Common myeloid progenitor, CD34-positive (primary cell): ENCODE measurements at regions of chr5 and their contacts with region 1.

Region 1: DNA sequence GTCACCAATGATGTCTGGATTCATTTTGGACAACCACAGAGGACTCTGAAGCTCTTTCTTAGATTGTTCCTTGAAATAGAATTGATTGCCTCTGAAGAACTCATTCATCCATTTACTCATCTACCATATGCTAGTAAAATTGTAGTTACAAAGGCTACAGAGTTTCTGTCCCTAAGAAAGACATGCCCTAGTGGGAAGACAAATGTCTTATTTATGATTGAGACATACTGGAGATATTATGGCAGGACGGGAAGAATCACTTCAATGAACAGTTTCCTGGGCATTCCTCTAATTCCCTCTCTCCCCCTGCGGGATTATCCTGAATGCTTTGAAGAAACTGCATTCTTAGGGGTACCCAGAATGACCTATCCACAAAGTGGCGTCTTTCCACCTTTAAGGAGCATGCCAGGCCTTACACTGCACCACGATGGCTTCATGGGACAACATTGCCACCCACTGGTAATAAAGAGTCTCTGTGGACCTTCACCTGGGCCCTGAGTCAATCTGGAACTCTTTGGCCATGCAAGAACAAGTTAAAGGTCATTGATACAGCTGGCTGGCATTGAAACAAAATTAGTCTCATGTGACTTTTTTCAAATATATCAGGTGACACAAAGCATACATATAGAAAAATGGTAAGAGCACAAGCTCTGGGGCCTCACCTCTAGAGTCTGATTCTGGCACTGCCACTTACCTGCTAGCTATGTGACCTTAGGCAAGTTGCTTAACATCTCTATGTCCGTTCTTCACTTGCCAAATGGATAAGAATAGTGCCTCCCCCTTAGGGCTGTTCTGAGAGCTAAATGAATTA is 32.1 kb downstream of the ANKRD55 start:
- DNase-seq: peak; percentile 72 to 86 (median 78)
- H3K4me3 ChIP-seq: no peak overlapping the region
- H3K27ac ChIP-seq: no peak overlapping the region
- H3K4me1 ChIP-seq: no peaks in the 10 kb centered on the region
- H3K27me3 ChIP-seq: no peaks in the 10 kb centered on the region

Region 2: DNA sequence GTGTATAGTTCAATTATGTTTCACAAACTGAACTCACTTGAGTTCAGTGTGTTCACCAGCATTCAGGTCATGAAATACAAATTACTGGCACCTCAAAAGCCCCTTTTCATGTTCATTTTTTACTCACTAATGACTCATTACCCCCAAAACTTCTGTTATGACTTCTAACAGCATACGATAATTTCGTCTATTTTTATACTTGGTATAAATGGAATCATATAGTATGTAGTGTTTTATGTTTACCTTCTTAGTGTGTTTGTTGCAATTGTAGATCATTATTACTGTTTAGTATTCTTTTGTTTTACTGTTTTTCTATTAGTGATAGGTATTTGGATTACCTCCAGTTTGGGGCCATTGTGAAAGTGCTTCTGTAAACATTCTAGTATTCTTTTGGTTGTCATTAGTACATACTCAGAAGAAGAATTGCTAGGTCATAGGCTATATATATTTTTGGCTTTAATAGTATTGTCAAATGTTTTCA is 429.8 kb before region 1 on chr5:
- CTCF ChIA-PET with region 1: no interaction called
- POLR2A ChIA-PET with region 1: no interaction called
- DNase-seq: no peak
- H3K4me3 ChIP-seq: no peak overlapping the region
- H3K27ac ChIP-seq: no peak overlapping the region
- H3K4me1 ChIP-seq: no peaks in the 10 kb centered on the region
- H3K27me3 ChIP-seq: no peaks in the 10 kb centered on the region

Region 3: GRCh38 chr5:55982957-55983381 is 218.1 kb before region 1 on chr5:
- CTCF ChIA-PET with region 1: interaction called, 44 read pairs
- POLR2A ChIA-PET with region 1: interaction called, 3 read pairs
- DNase-seq: peak in 1 of 3 donors; percentile 10
- H3K4me3 ChIP-seq: no peak overlapping the region
- H3K27ac ChIP-seq: no peak overlapping the region
- H3K4me1 ChIP-seq: no peaks in the 10 kb centered on the region
- H3K27me3 ChIP-seq: no peaks in the 10 kb centered on the region

Region 4: DNA sequence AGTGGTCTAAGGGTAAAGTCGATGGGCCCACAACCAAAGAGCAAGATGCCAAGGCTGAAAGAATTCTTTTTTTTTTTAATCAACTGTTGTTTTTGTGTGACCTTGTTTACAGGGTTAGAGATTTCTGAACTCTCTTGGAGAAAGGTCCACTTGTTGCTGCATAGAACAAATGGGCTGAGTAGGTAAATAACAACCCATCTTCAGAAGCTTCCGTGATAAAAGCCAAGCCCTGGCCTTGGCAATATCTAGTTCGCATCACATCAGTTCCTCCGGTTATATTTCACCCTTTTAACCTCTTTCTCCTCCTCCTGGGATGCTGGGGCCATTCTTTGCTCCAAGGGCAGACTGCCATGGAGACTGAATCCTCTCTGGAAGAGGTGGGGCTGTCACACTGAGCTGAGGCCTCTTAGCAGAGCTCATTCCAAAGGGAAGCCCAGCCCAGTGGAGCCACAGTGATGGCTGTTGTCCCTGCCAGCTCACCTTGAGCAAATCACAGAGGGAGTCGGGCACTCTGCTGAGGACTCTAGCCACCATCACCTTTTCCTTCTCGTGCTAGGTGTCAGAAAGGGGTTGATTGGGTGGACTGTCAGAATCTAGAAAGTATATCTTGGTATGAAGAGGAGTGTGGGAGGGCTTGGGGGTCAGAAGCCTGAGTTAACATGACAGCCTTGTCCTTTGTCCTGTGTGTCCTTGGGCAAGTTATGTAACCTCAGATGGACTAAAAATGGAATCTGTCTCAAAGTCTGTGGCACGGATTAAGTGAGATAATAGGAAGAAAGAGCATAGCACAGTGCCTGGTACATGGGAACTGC is 14.2 kb after region 1 on chr5:
- CTCF ChIA-PET with region 1: interaction called, 13 read pairs
- POLR2A ChIA-PET with region 1: no interaction called
- DNase-seq: no peak
- H3K4me3 ChIP-seq: no peak overlapping the region
- H3K27ac ChIP-seq: no peak overlapping the region
- H3K4me1 ChIP-seq: no peaks in the 10 kb centered on the region
- H3K27me3 ChIP-seq: no peaks in the 10 kb centered on the region

Region 5: DNA sequence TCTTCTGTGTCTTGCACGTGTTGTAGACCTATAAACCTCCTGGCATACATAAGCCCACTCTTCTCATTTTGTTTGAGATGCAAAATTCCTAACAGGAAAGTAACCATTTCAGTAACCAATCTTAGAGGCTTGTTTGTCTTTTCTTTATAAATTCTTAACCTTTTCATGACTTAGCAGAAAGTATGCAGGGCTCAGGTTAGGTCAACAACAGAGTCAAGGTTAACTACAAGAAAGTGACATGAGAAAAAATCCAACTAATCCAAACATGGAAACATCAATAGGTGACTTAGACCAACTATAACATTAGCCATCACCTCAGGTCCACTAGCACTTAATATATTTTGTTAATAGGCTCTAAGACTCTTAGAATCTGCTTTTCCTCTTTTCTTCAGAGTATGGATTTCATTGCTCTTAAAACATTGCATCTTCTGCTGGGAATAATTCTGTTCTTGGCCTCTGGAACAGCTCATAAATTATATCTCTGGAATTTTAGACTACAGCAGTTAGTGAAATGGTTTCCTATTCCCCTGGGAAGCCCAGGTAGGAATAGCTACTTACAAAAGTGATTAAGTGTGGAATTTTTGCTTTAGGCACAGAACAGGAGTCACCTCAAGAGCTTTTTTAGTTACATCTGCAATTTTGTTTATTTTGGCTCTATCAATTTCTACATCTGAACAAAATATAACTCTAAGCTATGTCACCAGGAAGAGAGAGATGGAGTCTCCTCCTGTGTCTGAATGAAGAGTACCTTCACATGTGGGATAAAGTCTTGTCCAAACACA is 187.4 kb after region 1 on chr5:
- CTCF ChIA-PET with region 1: no interaction called
- POLR2A ChIA-PET with region 1: no interaction called
- DNase-seq: no peak
- H3K4me3 ChIP-seq: no peak overlapping the region
- H3K27ac ChIP-seq: no peak overlapping the region
- H3K4me1 ChIP-seq: no peaks in the 10 kb centered on the region
- H3K27me3 ChIP-seq: no peaks in the 10 kb centered on the region